ENCODE measurements at regions of chr15 and their contacts with region 1.

Region 1: DNA sequence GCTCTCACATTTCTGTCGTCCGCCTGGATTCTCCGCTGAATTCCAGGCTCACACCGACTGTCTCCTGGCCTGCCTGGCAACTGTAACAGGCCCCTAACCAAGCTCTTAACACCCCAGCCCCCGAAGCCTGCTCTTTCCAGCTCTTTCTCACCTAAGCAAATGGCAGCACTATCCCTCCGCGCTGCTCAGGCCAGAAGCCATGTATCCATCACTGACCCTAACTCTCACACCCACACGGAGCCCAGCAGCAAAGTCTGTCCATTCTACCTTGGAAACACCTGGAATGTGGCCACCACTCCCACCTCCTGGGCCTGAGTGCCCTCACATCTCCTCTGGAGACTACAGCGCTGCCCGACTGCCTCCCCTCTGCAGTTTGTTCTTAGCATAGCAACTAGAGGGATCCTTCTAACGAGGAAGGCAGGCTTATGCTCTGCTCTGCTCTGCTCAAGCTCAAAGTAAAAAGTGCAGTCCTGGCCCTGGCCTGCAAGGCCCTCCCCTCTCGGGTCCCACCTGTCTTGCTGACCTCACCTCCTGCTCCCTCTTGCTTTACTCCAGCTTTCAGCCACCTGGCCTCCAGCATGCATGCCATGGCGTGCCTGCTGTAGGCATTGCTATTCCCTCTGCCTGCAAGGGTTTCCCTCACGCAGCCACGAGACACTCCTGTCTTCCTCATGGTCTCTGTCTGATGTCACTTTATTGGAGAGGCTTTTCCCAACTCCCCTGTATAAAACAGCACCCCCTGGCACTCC is 27.2 kb downstream of the FEM1B start:
- DNase-seq: no peak
- ATAC-seq: no peak
- H3K4me3 ChIP-seq: no peak overlapping the region
- H3K4me3 Mint-ChIP-seq: no peak overlapping the region
- H3K27ac ChIP-seq: no peak overlapping the region
- H3K27ac Mint-ChIP-seq: peak overlapping the region in 4 of 9 donors; percentile 23 to 72 (median 56)
- H3K4me1 ChIP-seq: peaks cover 5 to 15% of the 10 kb centered on the region in 2 donors
- H3K4me1 Mint-ChIP-seq: peaks cover 11 to 30% (median 27%) of the 10 kb centered on the region in 7 donors
- H3K27me3 ChIP-seq: no peaks in the 10 kb centered on the region
- H3K27me3 Mint-ChIP-seq: peaks cover 0 to 7% (median 0%) of the 10 kb centered on the region in 5 donors

Region 2: DNA sequence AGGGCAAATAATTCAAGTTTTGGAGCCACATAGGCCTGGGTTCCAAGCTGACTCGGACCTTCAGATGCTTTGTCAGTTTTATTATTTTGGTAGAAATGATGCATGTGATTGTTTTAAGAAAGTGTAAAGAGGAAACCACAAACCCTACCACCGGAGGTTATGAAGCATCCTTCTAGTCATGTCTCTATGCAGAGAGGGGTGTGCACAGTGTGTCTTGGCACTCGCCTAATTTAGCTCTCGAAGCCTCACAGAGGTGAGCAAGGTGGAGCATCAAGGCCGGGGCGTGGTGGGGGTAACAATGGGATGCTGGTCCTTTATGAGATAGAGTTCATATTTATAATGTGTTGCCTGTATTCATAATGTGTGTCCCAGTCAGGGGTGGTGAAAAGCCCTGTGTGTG is 1666.4 kb before region 1 on chr15:
- CTCF ChIA-PET with region 1: no interaction called
- POLR2A ChIA-PET with region 1: no interaction called
- intact Hi-C with region 1: no loop called
- DNase-seq: peak in 4 of 9 donors; percentile 4 to 46 (median 24)
- ATAC-seq: no peak
- H3K4me3 ChIP-seq: no peak overlapping the region
- H3K4me3 Mint-ChIP-seq: peak overlapping the region in 2 of 10 donors; percentile 37 to 66
- H3K27ac ChIP-seq: no peak overlapping the region
- H3K27ac Mint-ChIP-seq: peak overlapping the region in 3 of 9 donors; percentile 0 to 63 (median 39)
- H3K4me1 ChIP-seq: peaks cover 0 to 6% of the 10 kb centered on the region in 2 donors
- H3K4me1 Mint-ChIP-seq: peaks cover 4 to 13% (median 10%) of the 10 kb centered on the region in 7 donors
- H3K27me3 ChIP-seq: no peaks in the 10 kb centered on the region
- H3K27me3 Mint-ChIP-seq: peaks cover 0 to 4% (median 0%) of the 10 kb centered on the region in 5 donors

Region 3: GRCh38 chr15:67884514-67885487 is 420.0 kb before region 1 on chr15:
- CTCF ChIA-PET with region 1: no interaction called
- POLR2A ChIA-PET with region 1: no interaction called
- intact Hi-C with region 1: loop called in 1 of 2 experiments (anchors 10 kb)
- DNase-seq: peak; percentile 6 to 50 (median 35)
- ATAC-seq: peak; percentile 68
- H3K4me3 ChIP-seq: peak overlapping the region; percentile 28
- H3K4me3 Mint-ChIP-seq: peak overlapping the region; percentile 53 to 84 (median 74)
- H3K27ac ChIP-seq: no peak overlapping the region
- H3K27ac Mint-ChIP-seq: peak overlapping the region in 2 of 9 donors; percentile 4 to 32
- H3K4me1 ChIP-seq: no peaks in the 10 kb centered on the region
- H3K4me1 Mint-ChIP-seq: peaks cover 8 to 29% (median 20%) of the 10 kb centered on the region in 7 donors
- H3K27me3 ChIP-seq: no peaks in the 10 kb centered on the region
- H3K27me3 Mint-ChIP-seq: peaks cover 5 to 25% (median 21%) of the 10 kb centered on the region in 5 donors

Region 4: DNA sequence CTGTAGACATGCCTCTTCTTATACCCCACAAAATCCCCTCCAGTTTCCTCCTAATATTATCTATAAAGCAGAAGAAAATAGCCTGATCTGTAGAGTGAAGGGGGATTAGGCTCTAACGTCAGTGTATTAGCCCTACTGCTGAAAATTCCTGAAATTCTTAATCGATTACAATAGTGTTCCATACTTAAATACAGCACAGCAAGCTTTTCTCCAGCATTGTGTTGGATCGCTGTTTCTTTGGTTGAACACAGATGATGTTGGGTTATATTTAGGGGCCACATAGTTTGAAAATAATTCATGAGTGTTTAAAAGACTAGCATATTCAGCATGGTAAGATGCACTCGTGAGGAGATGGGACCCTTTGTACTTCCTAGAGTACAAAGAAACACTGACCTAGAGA is 198.1 kb before region 1 on chr15:
- CTCF ChIA-PET with region 1: no interaction called
- POLR2A ChIA-PET with region 1: no interaction called
- intact Hi-C with region 1: no loop called
- DNase-seq: no peak
- ATAC-seq: no peak
- H3K4me3 ChIP-seq: no peak overlapping the region
- H3K4me3 Mint-ChIP-seq: peak overlapping the region in 2 of 10 donors; percentile 17 to 36
- H3K27ac ChIP-seq: no peak overlapping the region
- H3K27ac Mint-ChIP-seq: peak overlapping the region in 3 of 9 donors; percentile 18 to 76 (median 48)
- H3K4me1 ChIP-seq: peaks cover 0 to 8% of the 10 kb centered on the region in 2 donors
- H3K4me1 Mint-ChIP-seq: peaks cover 18 to 88% (median 72%) of the 10 kb centered on the region in 7 donors
- H3K27me3 ChIP-seq: no peaks in the 10 kb centered on the region
- H3K27me3 Mint-ChIP-seq: no peaks in the 10 kb centered on the region

Region 5: GRCh38 chr15:68328443-68328842 is 23.7 kb after region 1 on chr15:
- CTCF ChIA-PET with region 1: interaction called, 18 read pairs
- POLR2A ChIA-PET with region 1: interaction called, 3 read pairs
- intact Hi-C with region 1: loop called in 1 of 2 experiments (anchors 1 kb)
- DNase-seq: peak in 3 of 9 donors; percentile 28 to 60 (median 32)
- ATAC-seq: peak; percentile 75
- H3K4me3 ChIP-seq: no peak overlapping the region
- H3K4me3 Mint-ChIP-seq: peak overlapping the region in 6 of 10 donors; percentile 3 to 74 (median 32)
- H3K27ac ChIP-seq: no peak overlapping the region
- H3K27ac Mint-ChIP-seq: peak overlapping the region in 2 of 9 donors; percentile 75 to 84
- H3K4me1 ChIP-seq: peaks cover 0 to 18% of the 10 kb centered on the region in 2 donors
- H3K4me1 Mint-ChIP-seq: peaks cover 29 to 38% (median 30%) of the 10 kb centered on the region in 7 donors
- H3K27me3 ChIP-seq: no peaks in the 10 kb centered on the region
- H3K27me3 Mint-ChIP-seq: peaks cover 0 to 29% (median 0%) of the 10 kb centered on the region in 5 donors

Region 6: DNA sequence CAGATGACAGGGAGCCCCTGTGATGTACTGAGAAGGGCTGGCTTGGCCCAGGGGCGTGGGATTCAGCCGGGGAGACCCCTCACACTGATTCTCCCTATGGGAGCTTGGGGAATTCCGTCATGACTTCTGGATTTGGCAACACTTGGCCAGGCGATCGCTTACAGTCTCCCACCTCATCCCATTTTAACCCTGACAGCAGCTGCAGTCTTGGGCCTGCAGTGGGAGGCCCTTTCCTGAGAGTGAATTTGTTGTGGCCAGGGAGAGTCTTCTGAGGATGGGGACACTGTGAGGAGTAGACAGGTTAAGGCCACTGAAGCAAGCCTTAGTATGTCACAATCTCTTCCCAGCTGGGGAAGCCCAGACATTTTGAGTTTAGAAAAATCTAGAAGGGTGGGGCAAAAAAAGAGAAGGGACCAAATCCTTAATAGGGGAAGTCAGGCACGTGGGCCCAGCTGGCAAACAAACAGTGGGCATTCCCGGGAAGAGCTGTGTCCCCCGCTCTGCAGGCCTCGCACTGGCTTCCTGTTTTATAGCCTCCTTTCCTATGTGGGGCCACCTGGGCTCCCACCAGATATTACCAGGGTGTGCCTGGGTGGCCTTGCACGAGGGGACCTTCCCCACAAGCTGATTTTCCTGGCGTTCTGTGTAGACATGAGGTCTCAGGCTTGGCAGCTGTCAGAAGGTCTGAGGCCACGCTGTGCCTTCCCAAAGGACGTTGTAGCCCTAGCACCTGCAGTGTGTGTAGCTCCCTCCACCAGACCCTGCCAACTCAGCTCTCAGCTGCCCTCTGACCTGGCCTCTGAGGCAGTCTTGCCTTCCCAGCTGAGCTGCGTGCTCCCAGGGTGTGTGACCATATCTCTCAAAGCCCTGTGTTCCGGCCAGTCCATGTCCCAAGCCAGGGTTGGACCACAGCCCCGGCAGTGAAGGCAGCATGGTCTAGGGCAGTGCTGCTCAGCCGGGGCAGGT is 37.3 kb after region 1 on chr15:
- CTCF ChIA-PET with region 1: no interaction called
- POLR2A ChIA-PET with region 1: no interaction called
- intact Hi-C with region 1: no loop called
- DNase-seq: no peak
- ATAC-seq: no peak
- H3K4me3 ChIP-seq: no peak overlapping the region
- H3K4me3 Mint-ChIP-seq: no peak overlapping the region
- H3K27ac ChIP-seq: no peak overlapping the region
- H3K27ac Mint-ChIP-seq: peak overlapping the region in 2 of 9 donors; percentile 7 to 55
- H3K4me1 ChIP-seq: no peaks in the 10 kb centered on the region
- H3K4me1 Mint-ChIP-seq: peaks cover 0 to 4% (median 0%) of the 10 kb centered on the region in 7 donors
- H3K27me3 ChIP-seq: no peaks in the 10 kb centered on the region
- H3K27me3 Mint-ChIP-seq: no peaks in the 10 kb centered on the region

Region 7: GRCh38 chr15:68383161-68384074 is 78.7 kb after region 1 on chr15:
- CTCF ChIA-PET with region 1: interaction called, 11 read pairs
- POLR2A ChIA-PET with region 1: interaction called, 4 read pairs
- intact Hi-C with region 1: loop called in 1 of 2 experiments (anchors 1 kb)
- DNase-seq: peak in 8 of 9 donors; percentile 25 to 60 (median 36)
- ATAC-seq: peak; percentile 88
- H3K4me3 ChIP-seq: no peak overlapping the region
- H3K4me3 Mint-ChIP-seq: no peak overlapping the region
- H3K27ac ChIP-seq: no peak overlapping the region
- H3K27ac Mint-ChIP-seq: peak overlapping the region in 1 of 9 donors; percentile 66
- H3K4me1 ChIP-seq: peaks cover 0 to 7% of the 10 kb centered on the region in 2 donors
- H3K4me1 Mint-ChIP-seq: peaks cover 11 to 26% (median 14%) of the 10 kb centered on the region in 7 donors
- H3K27me3 ChIP-seq: no peaks in the 10 kb centered on the region
- H3K27me3 Mint-ChIP-seq: no peaks in the 10 kb centered on the region

Region 8: DNA sequence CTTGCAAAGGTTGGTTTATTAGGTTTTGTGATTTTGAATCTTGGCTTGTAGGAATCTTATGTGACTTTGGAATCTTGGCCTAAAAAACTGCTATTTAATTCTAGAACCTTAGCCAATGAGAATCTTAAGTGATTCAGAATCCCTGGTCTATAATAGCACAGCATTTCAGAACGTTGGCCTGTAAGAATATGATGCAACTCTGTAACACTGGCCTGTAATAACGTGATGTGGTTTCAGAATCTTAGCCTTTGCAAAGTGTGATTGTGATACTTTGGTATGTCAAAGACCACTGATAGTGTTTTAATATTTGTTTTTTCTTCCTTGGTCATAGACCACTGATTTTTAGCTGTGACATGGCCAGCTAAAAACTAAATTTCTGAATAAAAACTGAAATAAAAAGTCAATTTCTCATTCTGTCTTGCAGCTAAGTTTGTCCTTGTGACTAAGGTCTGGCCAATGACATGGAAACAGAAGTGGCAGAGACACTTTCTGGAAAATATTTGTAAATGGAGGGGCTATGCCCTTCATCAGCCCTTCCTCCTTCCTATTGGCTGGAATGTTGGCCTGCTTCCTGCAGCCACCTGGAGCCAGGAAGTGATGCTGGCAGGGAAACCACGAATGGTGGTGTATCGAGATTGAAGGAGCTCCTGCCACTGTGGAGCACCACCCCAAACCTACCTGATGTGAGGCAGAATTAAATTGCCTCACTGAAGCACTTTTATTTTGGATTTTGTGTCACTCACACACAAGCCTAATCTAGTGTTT is 231.8 kb after region 1 on chr15:
- CTCF ChIA-PET with region 1: no interaction called
- POLR2A ChIA-PET with region 1: no interaction called
- intact Hi-C with region 1: loop called in 1 of 2 experiments (anchors 5 kb)
- DNase-seq: no peak
- ATAC-seq: no peak
- H3K4me3 ChIP-seq: no peak overlapping the region
- H3K4me3 Mint-ChIP-seq: no peak overlapping the region
- H3K27ac ChIP-seq: no peak overlapping the region
- H3K27ac Mint-ChIP-seq: no peak overlapping the region
- H3K4me1 ChIP-seq: no peaks in the 10 kb centered on the region
- H3K4me1 Mint-ChIP-seq: no peaks in the 10 kb centered on the region
- H3K27me3 ChIP-seq: no peaks in the 10 kb centered on the region
- H3K27me3 Mint-ChIP-seq: peaks cover 9 to 43% (median 19%) of the 10 kb centered on the region in 5 donors

Region 9: GRCh38 chr15:68550481-68551295 is 245.9 kb after region 1 on chr15:
- CTCF ChIA-PET with region 1: interaction called, 3 read pairs
- POLR2A ChIA-PET with region 1: no interaction called
- intact Hi-C with region 1: loop called in 1 of 2 experiments (anchors 2 kb)
- DNase-seq: peak; percentile 32 to 77 (median 55)
- ATAC-seq: peak; percentile 65
- H3K4me3 ChIP-seq: no peak overlapping the region
- H3K4me3 Mint-ChIP-seq: no peak overlapping the region
- H3K27ac ChIP-seq: no peak overlapping the region
- H3K27ac Mint-ChIP-seq: no peak overlapping the region
- H3K4me1 ChIP-seq: no peaks in the 10 kb centered on the region
- H3K4me1 Mint-ChIP-seq: peaks cover 0 to 3% (median 0%) of the 10 kb centered on the region in 7 donors
- H3K27me3 ChIP-seq: peaks cover 0 to 3% of the 10 kb centered on the region in 2 donors
- H3K27me3 Mint-ChIP-seq: peaks cover 32 to 49% (median 36%) of the 10 kb centered on the region in 5 donors

Region 10: DNA sequence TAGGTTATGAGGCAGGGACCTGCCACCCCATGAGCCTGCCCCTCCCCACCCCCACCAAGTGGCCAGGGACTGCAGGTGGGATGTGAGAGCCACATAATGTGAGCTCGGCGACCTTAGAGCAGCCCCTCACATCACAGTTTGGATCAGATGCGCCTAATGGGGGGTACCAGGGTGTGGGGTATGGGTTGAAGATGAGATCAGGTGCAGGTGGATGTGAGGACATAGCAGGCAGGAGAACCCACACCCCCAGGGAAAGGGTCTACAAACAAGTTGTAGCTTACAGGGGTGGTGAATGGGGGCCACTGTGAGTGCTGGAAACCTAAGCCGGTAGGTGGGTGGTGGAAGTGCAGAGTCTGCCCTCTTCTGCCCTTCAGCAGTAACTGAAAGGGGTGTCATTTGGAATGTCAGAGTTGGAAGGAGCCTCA is 368.0 kb after region 1 on chr15:
- CTCF ChIA-PET with region 1: no interaction called
- POLR2A ChIA-PET with region 1: no interaction called
- intact Hi-C with region 1: loop called in 1 of 2 experiments (anchors 1 kb)
- DNase-seq: no peak
- ATAC-seq: no peak
- H3K4me3 ChIP-seq: no peak overlapping the region
- H3K4me3 Mint-ChIP-seq: no peak overlapping the region
- H3K27ac ChIP-seq: no peak overlapping the region
- H3K27ac Mint-ChIP-seq: no peak overlapping the region
- H3K4me1 ChIP-seq: no peaks in the 10 kb centered on the region
- H3K4me1 Mint-ChIP-seq: peaks cover 0 to 6% (median 4%) of the 10 kb centered on the region in 7 donors
- H3K27me3 ChIP-seq: no peaks in the 10 kb centered on the region
- H3K27me3 Mint-ChIP-seq: peaks cover 6 to 17% (median 12%) of the 10 kb centered on the region in 5 donors